ENCODE measurements at regions of chr2 and their contacts with region 1.

Region 1: DNA sequence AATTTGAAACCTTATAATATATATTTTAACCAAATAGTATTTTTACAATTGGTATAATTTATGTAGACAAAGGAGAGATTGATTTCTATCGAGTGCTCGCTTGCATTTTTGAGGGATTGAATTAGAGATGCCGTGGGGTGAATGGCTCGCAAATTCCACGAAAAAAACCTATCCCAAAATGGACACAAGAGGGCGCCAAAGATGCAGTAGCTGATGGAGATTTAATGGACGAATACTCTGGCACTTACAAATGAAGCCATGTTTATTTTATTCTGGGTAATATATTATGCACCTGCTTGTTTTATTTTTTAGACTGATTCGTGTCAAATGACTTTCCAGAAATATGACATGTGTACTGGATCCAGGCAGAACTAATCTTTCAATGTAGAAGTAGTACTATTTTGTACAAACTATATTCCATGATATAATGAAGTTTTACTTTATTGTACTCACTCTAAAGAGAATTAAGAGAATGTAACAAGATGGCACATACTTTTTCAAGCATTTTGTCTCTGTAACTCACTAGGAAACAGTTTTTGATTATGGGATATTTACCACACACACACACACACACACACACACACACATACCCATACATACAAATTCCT is 505.4 kb downstream of the PLCL1 start:
- DNase-seq: no peak

Region 2: GRCh38 chr2:198214114-198214596 is 95.6 kb before region 1 on chr2:
- intact Hi-C with region 1: no loop called
- DNase-seq: no peak

Region 3: GRCh38 chr2:199739413-199740110 is 1429.8 kb after region 1 on chr2:
- intact Hi-C with region 1: loop called (anchors 5 kb)
- DNase-seq: peak; percentile 79

Measured in cardiac septum (tissue), 1 donor.